ENCODE measurements at regions of chr9 and their contacts with region 1.

Region 1: DNA sequence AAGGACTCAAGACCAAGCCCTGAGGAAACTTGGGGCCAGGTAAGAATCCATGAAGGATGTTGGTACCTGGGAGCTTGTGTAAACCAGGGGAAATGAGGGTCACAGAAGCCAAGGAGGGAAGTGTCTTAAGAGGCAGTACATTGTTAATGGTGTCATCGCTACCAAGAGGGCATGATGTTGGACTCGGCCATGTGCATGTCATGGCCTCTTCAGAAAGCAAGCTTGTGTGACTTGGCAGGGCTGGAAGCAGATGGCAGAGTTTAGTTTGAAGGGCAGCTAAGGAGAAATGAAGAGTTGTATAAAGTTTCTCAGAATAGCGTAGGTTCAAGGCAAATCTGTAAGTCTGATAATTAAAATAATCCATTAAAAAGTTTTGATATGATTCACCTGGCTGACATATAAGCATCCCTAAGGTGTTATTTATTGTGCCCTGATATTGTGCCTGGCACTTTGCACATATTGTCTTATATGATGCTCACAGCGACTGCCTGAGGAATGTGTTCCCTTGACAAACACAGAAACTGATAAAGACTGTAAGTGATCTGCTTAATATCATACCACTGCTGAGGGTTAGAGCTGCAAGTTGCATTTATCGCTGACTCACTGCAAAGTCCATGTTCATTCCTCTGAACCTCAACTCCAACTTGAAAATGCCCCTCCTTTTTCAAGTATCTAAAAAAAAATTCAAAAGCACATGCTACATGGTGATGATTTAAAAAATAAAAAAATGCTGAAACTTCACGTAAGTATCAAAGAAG is 81.3 kb upstream of the PTPN3 start:
- DNase-seq: no peak
- ATAC-seq: peak; percentile 69 to 88 (median 78)
- H3K4me3 ChIP-seq: no peak overlapping the region
- H3K27ac ChIP-seq: peak overlapping the region in 3 of 12 donors; percentile 4 to 48 (median 19)
- H3K4me1 ChIP-seq: peaks cover 0 to 10% (median 0%) of the 10 kb centered on the region in 12 donors
- H3K27me3 ChIP-seq: no peaks in the 10 kb centered on the region
- CTCF ChIP-seq: no peak
- POLR2A ChIP-seq: no peak

Region 2: DNA sequence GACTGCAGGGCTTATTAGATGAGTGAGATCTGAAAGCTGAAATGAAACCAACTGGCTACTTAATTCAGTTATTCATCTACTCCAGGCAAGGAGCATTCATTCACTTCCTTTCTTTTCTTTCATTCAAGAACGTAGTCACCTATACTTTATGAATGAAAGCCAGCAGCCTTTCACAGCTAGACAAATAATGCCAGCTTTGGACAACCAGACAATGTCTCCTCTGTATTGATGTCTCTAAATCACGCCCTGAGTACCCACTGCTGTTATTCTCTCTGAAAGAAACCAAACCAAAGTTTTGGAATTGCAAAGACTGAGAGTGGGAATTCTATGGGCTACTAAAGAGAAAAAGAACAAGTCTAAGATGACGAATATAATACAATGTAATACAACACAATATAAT is 39.9 kb after region 1 on chr9:
- intact Hi-C with region 1: loop called in 1 of 10 experiments (anchors 2 kb)
- DNase-seq: no peak
- ATAC-seq: no peak
- H3K4me3 ChIP-seq: no peak overlapping the region
- H3K27ac ChIP-seq: no peak overlapping the region
- H3K4me1 ChIP-seq: peaks cover 0 to 4% (median 0%) of the 10 kb centered on the region in 12 donors
- H3K27me3 ChIP-seq: peaks cover 0 to 2% (median 0%) of the 10 kb centered on the region in 9 donors
- CTCF ChIP-seq: no peak
- POLR2A ChIP-seq: no peak

Region 3: DNA sequence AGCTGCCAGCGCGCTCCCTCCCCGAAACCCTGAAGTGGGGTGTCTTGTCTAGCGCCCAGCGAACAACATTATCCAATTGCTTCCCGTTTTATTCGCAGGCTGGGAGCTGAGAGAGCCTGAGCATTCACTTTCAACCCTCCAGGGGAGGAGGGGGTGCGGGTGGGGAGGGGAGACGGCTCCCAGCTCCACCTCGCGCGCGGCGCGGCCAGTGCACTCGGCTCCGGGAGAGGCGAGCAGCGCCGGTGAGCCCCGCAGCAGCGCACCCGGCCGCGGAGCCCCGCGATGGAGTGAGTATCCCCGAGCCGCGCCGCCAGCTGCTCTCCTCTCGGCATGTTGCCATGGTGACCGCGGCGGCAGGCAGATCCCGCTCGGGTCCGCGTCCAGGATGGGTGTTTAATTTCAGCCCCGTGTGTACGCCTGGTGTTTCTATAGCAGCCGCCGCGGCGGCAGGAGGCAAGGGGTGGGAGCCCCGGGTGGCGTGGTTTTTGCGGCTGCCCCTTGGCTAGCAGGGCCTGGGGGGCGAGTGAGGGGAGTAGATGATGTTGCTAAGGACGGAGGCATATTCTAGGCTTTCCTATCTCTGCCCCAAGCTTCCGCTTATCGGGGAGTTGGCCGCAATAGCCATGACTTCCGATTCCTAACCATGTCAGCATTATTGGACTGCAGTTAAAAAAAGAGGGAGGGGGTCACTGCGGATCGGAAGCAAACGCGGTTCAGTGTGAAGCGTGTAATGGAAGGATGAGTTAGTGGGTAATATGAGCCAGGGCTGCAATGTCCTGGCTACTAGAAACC is 61.4 kb after region 1 on chr9:
- intact Hi-C with region 1: loop called in 1 of 10 experiments (anchors 5 kb)
- DNase-seq: peak; percentile 55 to 78 (median 63)
- ATAC-seq: peak; percentile 41 to 79 (median 68)
- H3K4me3 ChIP-seq: peak overlapping the region; percentile 18 to 73 (median 59)
- H3K27ac ChIP-seq: peak overlapping the region in 6 of 12 donors; percentile 8 to 69 (median 48)
- H3K4me1 ChIP-seq: peaks cover 0 to 22% (median 4%) of the 10 kb centered on the region in 12 donors
- H3K27me3 ChIP-seq: peaks cover 0 to 39% (median 4%) of the 10 kb centered on the region in 9 donors
- CTCF ChIP-seq: no peak
- POLR2A ChIP-seq: no peak

Region 4: GRCh38 chr9:109652964-109653363 is 73.6 kb after region 1 on chr9:
- intact Hi-C with region 1: loop called (anchors 1 to 5 kb)
- DNase-seq: peak in 2 of 5 donors; percentile 21 to 22
- ATAC-seq: peak; percentile 72 to 86 (median 78)
- H3K4me3 ChIP-seq: no peak overlapping the region
- H3K27ac ChIP-seq: no peak overlapping the region
- H3K4me1 ChIP-seq: peaks cover 0 to 4% (median 0%) of the 10 kb centered on the region in 12 donors
- H3K27me3 ChIP-seq: no peaks in the 10 kb centered on the region
- CTCF ChIP-seq: peak in 11 of 12 donors; percentile 24 to 65 (median 50)
- POLR2A ChIP-seq: no peak

Region 5: GRCh38 chr9:109817846-109818472 is 238.6 kb after region 1 on chr9:
- intact Hi-C with region 1: loop called in 9 of 10 experiments (anchors 2 to 10 kb)
- DNase-seq: peak in 4 of 5 donors; percentile 71 to 86 (median 80)
- ATAC-seq: peak; percentile 74 to 82 (median 78)
- H3K4me3 ChIP-seq: peak overlapping the region in 4 of 12 donors; percentile 14 to 20 (median 20)
- H3K27ac ChIP-seq: peak overlapping the region in 11 of 12 donors; percentile 15 to 81 (median 70)
- H3K4me1 ChIP-seq: peaks cover 0 to 41% (median 21%) of the 10 kb centered on the region in 12 donors
- H3K27me3 ChIP-seq: no peaks in the 10 kb centered on the region
- CTCF ChIP-seq: peak; percentile 78 to 92 (median 82)
- POLR2A ChIP-seq: no peak

Region 6: GRCh38 chr9:109887079-109887478 is 307.7 kb after region 1 on chr9:
- intact Hi-C with region 1: loop called in 9 of 10 experiments (anchors 5 to 10 kb)
- DNase-seq: peak in 2 of 5 donors; percentile 36 to 54
- ATAC-seq: peak; percentile 77 to 88 (median 86)
- H3K4me3 ChIP-seq: no peak overlapping the region
- H3K27ac ChIP-seq: peak overlapping the region; percentile 35 to 87 (median 75)
- H3K4me1 ChIP-seq: peaks cover 2 to 61% (median 38%) of the 10 kb centered on the region in 12 donors
- H3K27me3 ChIP-seq: no peaks in the 10 kb centered on the region
- CTCF ChIP-seq: no peak
- POLR2A ChIP-seq: no peak

Region 7: DNA sequence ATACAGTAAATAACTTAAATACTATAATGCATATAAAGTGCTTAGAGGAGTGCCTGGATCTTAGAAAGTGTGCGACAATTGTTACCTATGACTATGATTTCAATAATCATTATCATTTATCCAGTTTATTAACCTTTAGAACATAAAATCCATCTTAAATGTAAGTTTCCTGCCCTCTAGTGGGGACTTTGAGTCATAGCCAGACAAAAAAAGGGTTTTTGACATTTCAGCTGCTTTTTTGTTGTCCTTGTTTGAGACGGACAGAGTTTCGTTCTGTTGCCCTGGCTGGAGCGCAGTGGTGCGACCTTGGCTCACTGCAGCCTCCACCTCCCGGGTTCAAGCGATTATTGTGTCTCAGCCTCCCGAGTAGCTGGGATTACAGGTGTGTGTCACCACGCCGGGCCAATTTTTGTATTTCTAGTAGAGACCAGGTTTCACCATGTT is 638.3 kb after region 1 on chr9:
- intact Hi-C with region 1: loop called in 8 of 10 experiments (anchors 5 to 10 kb)
- DNase-seq: no peak
- ATAC-seq: no peak
- H3K4me3 ChIP-seq: no peak overlapping the region
- H3K27ac ChIP-seq: no peak overlapping the region
- H3K4me1 ChIP-seq: peaks cover 0 to 5% (median 0%) of the 10 kb centered on the region in 12 donors
- H3K27me3 ChIP-seq: no peaks in the 10 kb centered on the region
- CTCF ChIP-seq: peak; percentile 73 to 90 (median 81)
- POLR2A ChIP-seq: no peak

Measured in heart left ventricle (tissue), 16 donors.